Endothelial cell of umbilical vein (primary cell): ENCODE measurements at regions of chr1 and their contacts with region 1.

Region 1: GRCh38 chr1:32521165-32521564 is 18.1 kb upstream of the ZBTB8A start:
- DNase-seq: no peak
- H3K4me3 ChIP-seq: no peak overlapping the region
- H3K27ac ChIP-seq: no peak overlapping the region
- H3K4me1 ChIP-seq: no peaks in the 10 kb centered on the region
- H3K27me3 ChIP-seq: peaks cover 0 to 2% of the 10 kb centered on the region in 2 experiments
- CTCF ChIP-seq: no peak
- POLR2A ChIP-seq: no peak

Region 2: GRCh38 chr1:32448773-32449456 is 72.2 kb before region 1 on chr1:
- CTCF ChIA-PET with region 1: interaction called, 28 read pairs
- POLR2A ChIA-PET with region 1: no interaction called
- dilution Hi-C with region 1: no loop called
- intact Hi-C with region 1: loop called (anchors 1 kb)
- DNase-seq: peak; percentile 18
- H3K4me3 ChIP-seq: no peak overlapping the region
- H3K27ac ChIP-seq: no peak overlapping the region
- H3K4me1 ChIP-seq: peaks cover 4% of the 10 kb centered on the region
- H3K27me3 ChIP-seq: peaks cover 0 to under 1% of the 10 kb centered on the region in 2 experiments
- CTCF ChIP-seq: peak; percentile 27 to 40
- POLR2A ChIP-seq: no peak

Region 3: GRCh38 chr1:32538887-32539583 is 17.9 kb after region 1 on chr1 and contains the start of gene ZBTB8A:
- CTCF ChIA-PET with region 1: interaction called, 35 read pairs
- POLR2A ChIA-PET with region 1: interaction called, 9 read pairs
- dilution Hi-C with region 1: no loop called
- intact Hi-C with region 1: no loop called
- DNase-seq: peak; percentile 79
- H3K4me3 ChIP-seq: peak within 1 kb of the TSS; percentile 65 to 85 (median 79)
- H3K27ac ChIP-seq: peak within 1 kb of the TSS; percentile 62
- H3K4me1 ChIP-seq: peaks cover 11% of the 10 kb centered on the region
- H3K27me3 ChIP-seq: no peaks in the 10 kb centered on the region
- CTCF ChIP-seq: no peak
- POLR2A ChIP-seq: no peak
- total RNA-seq, gene ZBTB8A: 9.1 and 9.6 TPM in 2 replicates

Region 4: GRCh38 chr1:32619701-32620485 is 98.7 kb after region 1 on chr1:
- CTCF ChIA-PET with region 1: interaction called, 66 read pairs
- POLR2A ChIA-PET with region 1: no interaction called
- dilution Hi-C with region 1: no loop called
- intact Hi-C with region 1: loop called (anchors 1 kb)
- DNase-seq: peak; percentile 45
- H3K4me3 ChIP-seq: no peak overlapping the region
- H3K27ac ChIP-seq: no peak overlapping the region
- H3K4me1 ChIP-seq: no peaks in the 10 kb centered on the region
- H3K27me3 ChIP-seq: no peaks in the 10 kb centered on the region
- CTCF ChIP-seq: no peak
- POLR2A ChIP-seq: no peak

Region 5: GRCh38 chr1:32695098-32695904 is 174.1 kb after region 1 on chr1:
- CTCF ChIA-PET with region 1: interaction called, 11 read pairs
- POLR2A ChIA-PET with region 1: no interaction called
- dilution Hi-C with region 1: no loop called
- intact Hi-C with region 1: no loop called
- DNase-seq: peak; percentile 62
- H3K4me3 ChIP-seq: no peak overlapping the region
- H3K27ac ChIP-seq: no peak overlapping the region
- H3K4me1 ChIP-seq: peaks cover 9% of the 10 kb centered on the region
- H3K27me3 ChIP-seq: no peaks in the 10 kb centered on the region
- CTCF ChIP-seq: no peak
- POLR2A ChIP-seq: no peak

Region 6: DNA sequence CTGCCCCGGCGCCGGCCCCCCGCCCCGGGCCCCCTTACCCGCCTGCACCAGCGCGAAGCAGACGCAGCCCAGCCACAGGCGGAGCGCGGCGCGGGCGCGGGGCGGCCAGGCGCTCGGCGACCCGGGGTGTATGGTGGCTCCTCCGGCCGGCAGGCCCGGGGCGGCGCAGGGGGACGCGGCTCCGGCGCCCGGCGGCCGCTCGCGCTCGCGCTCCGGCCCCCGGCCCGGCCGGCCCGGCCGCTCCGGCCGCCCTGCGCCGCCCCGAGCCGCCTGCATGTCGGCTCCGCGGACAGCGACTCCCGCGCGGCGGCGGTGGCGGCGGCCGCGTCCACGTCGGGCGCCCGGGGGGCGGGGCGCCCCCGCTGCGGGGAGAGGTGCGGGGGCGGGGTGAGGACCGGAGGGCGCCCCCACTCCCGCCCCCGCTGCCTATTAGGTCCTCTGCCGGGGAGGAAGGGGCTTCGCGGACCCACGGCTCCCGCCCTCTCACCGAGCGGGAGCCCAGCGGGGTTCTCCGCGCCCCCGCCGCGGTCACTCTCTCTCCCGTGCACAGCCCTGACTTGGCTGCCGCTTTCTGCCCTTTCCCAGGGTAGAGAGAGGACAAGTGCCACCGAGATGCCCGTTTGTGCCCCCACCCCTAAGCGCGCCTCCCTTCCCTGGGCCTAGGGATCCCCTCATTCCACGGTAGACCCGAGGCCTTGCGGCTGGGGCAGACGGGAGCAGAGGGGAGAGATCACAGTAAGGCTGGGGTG is 349.6 kb after region 1 on chr1 and contains the start of gene FNDC5:
- CTCF ChIA-PET with region 1: interaction called, 16 read pairs
- POLR2A ChIA-PET with region 1: no interaction called
- dilution Hi-C with region 1: no loop called
- intact Hi-C with region 1: loop called (anchors 1 kb)
- DNase-seq: no peak
- H3K4me3 ChIP-seq: peak within 1 kb of the TSS in 1 of 3 experiments; percentile 36
- H3K27ac ChIP-seq: no peak within 1 kb of the TSS
- H3K4me1 ChIP-seq: no peaks in the 10 kb centered on the region
- H3K27me3 ChIP-seq: peaks cover 14 to 17% of the 10 kb centered on the region in 2 experiments
- CTCF ChIP-seq: no peak
- POLR2A ChIP-seq: no peak
- total RNA-seq, gene FNDC5: 0.64 TPM in 1 of 2 replicates, not detected in the other

Region 7: DNA sequence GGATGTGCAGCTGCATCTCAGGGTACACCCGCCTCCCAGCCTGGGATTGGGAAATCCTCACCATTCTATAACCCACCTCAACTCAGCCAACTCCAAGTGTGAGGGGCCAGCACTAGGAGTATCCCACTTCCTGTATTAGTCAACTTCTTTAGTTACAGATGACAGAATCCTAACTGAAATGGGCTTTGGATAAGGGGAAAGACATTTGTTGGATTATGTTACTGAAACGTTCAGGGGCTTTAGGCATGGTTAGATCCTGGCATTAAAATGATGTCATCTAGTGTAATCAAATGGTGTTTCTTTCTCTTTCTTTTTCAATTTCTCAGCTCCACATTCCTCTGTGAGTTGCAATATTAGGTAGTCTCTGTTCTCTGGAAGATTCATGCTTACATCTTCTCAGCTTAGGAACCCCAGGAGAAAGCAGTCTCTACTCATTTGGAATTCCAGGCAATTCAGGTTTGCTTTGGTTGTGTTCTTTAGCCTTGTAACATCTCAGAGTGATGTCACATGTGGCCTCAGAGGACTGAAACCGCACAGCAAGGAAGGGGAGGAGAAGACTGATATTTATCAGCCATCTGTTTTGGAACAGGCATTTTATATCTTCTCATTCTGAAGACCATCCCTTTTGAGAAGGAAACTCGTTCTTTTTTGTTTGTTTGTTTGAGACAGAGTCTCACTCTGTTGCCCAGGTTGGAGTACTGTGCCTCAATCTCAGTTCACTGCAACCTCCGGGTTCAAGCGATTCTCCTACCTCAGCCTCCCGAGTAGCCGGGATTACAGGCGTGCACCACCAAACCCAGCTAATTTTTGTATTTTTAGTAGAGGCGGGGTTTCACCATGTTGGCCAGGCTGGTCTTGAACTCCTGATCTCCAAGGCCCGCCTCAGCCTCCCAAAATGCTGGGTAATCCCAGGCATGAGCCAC is 398.9 kb after region 1 on chr1:
- CTCF ChIA-PET with region 1: no interaction called
- POLR2A ChIA-PET with region 1: no interaction called
- dilution Hi-C with region 1: no loop called
- intact Hi-C with region 1: no loop called
- DNase-seq: no peak
- H3K4me3 ChIP-seq: no peak overlapping the region
- H3K27ac ChIP-seq: no peak overlapping the region
- H3K4me1 ChIP-seq: no peaks in the 10 kb centered on the region
- H3K27me3 ChIP-seq: peaks cover 4% of the 10 kb centered on the region in 2 experiments
- CTCF ChIP-seq: no peak
- POLR2A ChIP-seq: no peak